ENCODE measurements at regions of chr7 and their contacts with region 1.

Region 1: DNA sequence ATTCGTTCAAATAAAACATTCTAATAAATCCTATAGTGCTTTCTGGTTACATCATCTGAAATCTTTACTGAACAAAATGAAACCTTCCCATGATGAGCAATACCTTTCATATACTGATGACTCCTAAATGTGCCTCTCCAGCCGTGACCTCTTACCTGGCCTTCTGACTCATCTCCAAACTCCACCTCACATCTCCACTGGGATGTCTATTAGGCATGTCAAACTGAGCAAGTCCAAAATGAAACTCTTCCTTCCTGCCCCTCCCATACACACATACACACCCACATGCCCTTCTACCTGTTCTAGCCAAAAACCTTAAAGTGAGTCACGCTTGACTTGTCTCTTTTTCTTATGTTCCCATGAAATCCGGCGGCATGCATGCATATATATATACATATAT is 22.9 kb downstream of the GSAP start:
- DNase-seq: peak; percentile 15
- ATAC-seq: peak; percentile 56
- H3K4me3 ChIP-seq: no peak overlapping the region
- H3K4me3 Mint-ChIP-seq: peak overlapping the region; percentile 9
- H3K27ac ChIP-seq: peak overlapping the region in 1 of 2 donors; percentile 85
- H3K27ac Mint-ChIP-seq: peak overlapping the region; percentile 92
- H3K4me1 ChIP-seq: peaks cover 22 to 33% of the 10 kb centered on the region in 2 donors
- H3K4me1 Mint-ChIP-seq: peaks cover 40% of the 10 kb centered on the region
- H3K27me3 ChIP-seq: no peaks in the 10 kb centered on the region
- H3K27me3 Mint-ChIP-seq: no peaks in the 10 kb centered on the region
- CTCF ChIP-seq: no peak

Region 2: GRCh38 chr7:77425101-77426051 is 32.1 kb after region 1 on chr7:
- CTCF ChIA-PET with region 1: no interaction called
- POLR2A ChIA-PET with region 1: no interaction called
- intact Hi-C with region 1: loop called (anchors 5 kb)
- DNase-seq: no peak
- ATAC-seq: no peak
- H3K4me3 ChIP-seq: peak overlapping the region in 1 of 5 experiments; percentile 22
- H3K4me3 Mint-ChIP-seq: peak overlapping the region; percentile 76
- H3K27ac ChIP-seq: no peak overlapping the region
- H3K27ac Mint-ChIP-seq: peak overlapping the region; percentile 39
- H3K4me1 ChIP-seq: peaks cover 8 to 22% of the 10 kb centered on the region in 2 donors
- H3K4me1 Mint-ChIP-seq: peaks cover 34% of the 10 kb centered on the region
- H3K27me3 ChIP-seq: no peaks in the 10 kb centered on the region
- H3K27me3 Mint-ChIP-seq: no peaks in the 10 kb centered on the region
- CTCF ChIP-seq: no peak

Region 3: GRCh38 chr7:77798394-77799077 is 405.3 kb after region 1 on chr7 and contains the starts of genes PHTF2 and TMEM60:
- CTCF ChIA-PET with region 1: no interaction called
- POLR2A ChIA-PET with region 1: no interaction called
- intact Hi-C with region 1: no loop called
- DNase-seq: peak; percentile 97
- ATAC-seq: peak; percentile 86
- H3K4me3 ChIP-seq: peak within 1 kb of the TSS; percentile 79 to 97 (median 91)
- H3K4me3 Mint-ChIP-seq: peak within 1 kb of the TSS; percentile 91
- H3K27ac ChIP-seq: peak within 1 kb of the TSS; percentile 77 to 87
- H3K27ac Mint-ChIP-seq: peak within 1 kb of the TSS; percentile 92
- H3K4me1 ChIP-seq: peaks cover 46 to 49% of the 10 kb centered on the region in 2 donors
- H3K4me1 Mint-ChIP-seq: peaks cover 79% of the 10 kb centered on the region
- H3K27me3 ChIP-seq: no peaks in the 10 kb centered on the region
- H3K27me3 Mint-ChIP-seq: no peaks in the 10 kb centered on the region
- CTCF ChIP-seq: peak; percentile 74
- total RNA-seq, gene PHTF2: 44.8 and 49.6 TPM in 2 replicates
- total RNA-seq, gene TMEM60: 18.9 and 20.4 TPM in 2 replicates